ENCODE measurements at regions of chr5 and their contacts with region 1.

Region 1: DNA sequence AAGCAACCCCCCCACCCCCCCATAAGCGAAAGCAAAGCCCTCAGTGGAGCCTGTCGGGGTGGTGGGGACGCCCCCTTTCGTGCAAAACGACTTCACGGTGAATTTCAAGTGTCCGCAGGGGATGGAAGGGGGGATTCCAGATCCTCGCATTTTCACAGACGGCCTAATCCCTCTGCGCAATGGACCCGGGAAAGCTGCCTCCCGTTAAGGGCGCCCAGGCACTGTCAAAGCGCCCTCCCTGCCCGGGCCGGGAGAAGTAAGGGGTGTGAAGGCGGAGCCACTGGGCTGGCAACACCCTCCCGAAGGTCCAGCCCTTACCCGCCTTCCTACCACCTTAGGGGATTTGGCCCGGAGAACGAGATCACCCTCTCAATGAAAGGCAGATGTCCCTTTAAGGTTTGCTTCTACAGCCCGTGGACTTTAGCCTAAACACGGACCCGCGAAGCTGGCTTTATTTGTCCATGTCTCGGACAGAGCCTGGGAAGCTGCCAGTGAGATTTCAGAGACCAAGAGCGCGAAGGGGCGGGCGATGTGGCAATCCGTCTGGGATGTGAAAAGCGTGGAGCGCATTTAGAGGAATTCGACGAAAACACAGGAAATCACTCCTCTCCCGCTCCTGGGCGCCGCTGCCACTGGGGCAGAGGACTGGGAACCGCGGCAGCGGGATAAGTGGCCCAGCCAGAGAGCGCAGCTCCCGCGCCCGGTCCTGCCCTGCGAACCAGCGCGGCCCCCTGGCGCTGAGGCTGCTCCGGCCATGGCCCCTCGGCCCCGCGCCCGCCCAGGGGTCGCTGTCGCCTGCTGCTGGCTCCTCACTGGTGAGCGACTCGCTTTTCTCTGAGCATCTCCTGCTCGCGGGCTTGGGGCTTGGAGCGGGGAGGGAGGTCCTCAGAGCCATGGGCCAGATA is at the starts of genes ITGA1 and PELO:
- DNase-seq: peak; percentile 13 to 55 (median 44)
- ATAC-seq: peak; percentile 84
- H3K4me3 ChIP-seq: peak within 1 kb of the TSS; percentile 71
- H3K4me3 Mint-ChIP-seq: peak within 1 kb of the TSS; percentile 85 to 95 (median 92)
- H3K27ac ChIP-seq: peak within 1 kb of the TSS; percentile 67
- H3K27ac Mint-ChIP-seq: peak within 1 kb of the TSS; percentile 7 to 87 (median 59)
- H3K4me1 ChIP-seq: peaks cover 0 to 15% of the 10 kb centered on the region in 2 donors
- H3K4me1 Mint-ChIP-seq: peaks cover 16 to 40% (median 33%) of the 10 kb centered on the region in 7 donors
- H3K27me3 ChIP-seq: no peaks in the 10 kb centered on the region
- H3K27me3 Mint-ChIP-seq: peaks cover 0 to 41% (median 3%) of the 10 kb centered on the region in 5 donors
- total RNA-seq, gene ITGA1: 0.92 to 8.7 (median 2.4) TPM
- total RNA-seq, gene PELO: 7.7 to 16.8 (median 9.7) TPM

Region 2: GRCh38 chr5:52665559-52665958 is 122.3 kb before region 1 on chr5:
- CTCF ChIA-PET with region 1: interaction called, 3 read pairs
- POLR2A ChIA-PET with region 1: no interaction called
- intact Hi-C with region 1: loop called in 1 of 2 experiments (anchors 1 kb)
- DNase-seq: no peak
- ATAC-seq: no peak
- H3K4me3 ChIP-seq: no peak overlapping the region
- H3K4me3 Mint-ChIP-seq: no peak overlapping the region
- H3K27ac ChIP-seq: no peak overlapping the region
- H3K27ac Mint-ChIP-seq: peak overlapping the region in 1 of 9 donors; percentile 32
- H3K4me1 ChIP-seq: no peaks in the 10 kb centered on the region
- H3K4me1 Mint-ChIP-seq: peaks cover 0 to 15% (median 4%) of the 10 kb centered on the region in 7 donors
- H3K27me3 ChIP-seq: no peaks in the 10 kb centered on the region
- H3K27me3 Mint-ChIP-seq: peaks cover 0 to 33% (median 0%) of the 10 kb centered on the region in 5 donors

Region 3: DNA sequence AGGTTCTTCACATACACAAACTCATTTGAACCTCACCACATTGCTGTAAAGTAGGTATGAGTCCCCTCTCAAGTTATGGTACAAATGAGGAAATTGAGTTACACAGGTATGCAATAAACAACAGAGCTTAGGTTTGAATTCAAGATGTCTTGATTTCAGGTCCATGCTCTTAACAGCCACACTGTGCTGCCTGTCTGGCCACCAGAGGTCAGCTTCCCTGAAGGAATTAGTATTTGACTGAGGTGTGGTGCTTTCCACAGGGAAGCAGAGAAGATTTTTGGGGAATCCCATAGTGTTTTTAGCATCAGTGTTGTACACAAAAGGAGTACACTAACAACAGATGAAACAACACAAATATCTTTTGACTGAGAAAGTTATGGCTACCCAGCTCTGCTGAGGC is 94.6 kb before region 1 on chr5:
- CTCF ChIA-PET with region 1: interaction called, 3 read pairs
- POLR2A ChIA-PET with region 1: no interaction called
- intact Hi-C with region 1: loop called (anchors 1 kb)
- DNase-seq: peak in 7 of 9 donors; percentile 10 to 27 (median 25)
- ATAC-seq: peak; percentile 48
- H3K4me3 ChIP-seq: no peak overlapping the region
- H3K4me3 Mint-ChIP-seq: no peak overlapping the region
- H3K27ac ChIP-seq: no peak overlapping the region
- H3K27ac Mint-ChIP-seq: peak overlapping the region in 2 of 9 donors; percentile 1 to 18
- H3K4me1 ChIP-seq: no peaks in the 10 kb centered on the region
- H3K4me1 Mint-ChIP-seq: peaks cover 0 to 17% (median 7%) of the 10 kb centered on the region in 7 donors
- H3K27me3 ChIP-seq: no peaks in the 10 kb centered on the region
- H3K27me3 Mint-ChIP-seq: peaks cover 0 to 26% (median 0%) of the 10 kb centered on the region in 5 donors

Region 4: GRCh38 chr5:52743970-52744369 is 43.9 kb before region 1 on chr5:
- CTCF ChIA-PET with region 1: no interaction called
- POLR2A ChIA-PET with region 1: no interaction called
- intact Hi-C with region 1: loop called (anchors 1 kb)
- DNase-seq: peak in 8 of 9 donors; percentile 24 to 68 (median 54)
- ATAC-seq: peak; percentile 91
- H3K4me3 ChIP-seq: no peak overlapping the region
- H3K4me3 Mint-ChIP-seq: peak overlapping the region in 9 of 10 donors; percentile 42 to 70 (median 61)
- H3K27ac ChIP-seq: peak overlapping the region; percentile 49
- H3K27ac Mint-ChIP-seq: peak overlapping the region; percentile 80 to 93 (median 90)
- H3K4me1 ChIP-seq: peaks cover 35 to 36% of the 10 kb centered on the region in 2 donors
- H3K4me1 Mint-ChIP-seq: peaks cover 35 to 69% (median 61%) of the 10 kb centered on the region in 7 donors
- H3K27me3 ChIP-seq: no peaks in the 10 kb centered on the region
- H3K27me3 Mint-ChIP-seq: peaks cover 0 to 5% (median 0%) of the 10 kb centered on the region in 5 donors

Region 5: GRCh38 chr5:52771343-52772039 is 16.4 kb before region 1 on chr5:
- CTCF ChIA-PET with region 1: interaction called, 3 read pairs
- POLR2A ChIA-PET with region 1: interaction called, 4 read pairs
- intact Hi-C with region 1: loop called in 1 of 2 experiments (anchors 1 kb)
- DNase-seq: peak in 4 of 9 donors; percentile 21 to 43 (median 26)
- ATAC-seq: peak; percentile 71
- H3K4me3 ChIP-seq: peak overlapping the region; percentile 3
- H3K4me3 Mint-ChIP-seq: peak overlapping the region in 9 of 10 donors; percentile 42 to 78 (median 67)
- H3K27ac ChIP-seq: peak overlapping the region; percentile 31
- H3K27ac Mint-ChIP-seq: peak overlapping the region; percentile 67 to 94 (median 85)
- H3K4me1 ChIP-seq: peaks cover 34 to 45% of the 10 kb centered on the region in 2 donors
- H3K4me1 Mint-ChIP-seq: peaks cover 35 to 76% (median 49%) of the 10 kb centered on the region in 7 donors
- H3K27me3 ChIP-seq: no peaks in the 10 kb centered on the region
- H3K27me3 Mint-ChIP-seq: peaks cover 0 to 7% (median 0%) of the 10 kb centered on the region in 5 donors

Region 6: DNA sequence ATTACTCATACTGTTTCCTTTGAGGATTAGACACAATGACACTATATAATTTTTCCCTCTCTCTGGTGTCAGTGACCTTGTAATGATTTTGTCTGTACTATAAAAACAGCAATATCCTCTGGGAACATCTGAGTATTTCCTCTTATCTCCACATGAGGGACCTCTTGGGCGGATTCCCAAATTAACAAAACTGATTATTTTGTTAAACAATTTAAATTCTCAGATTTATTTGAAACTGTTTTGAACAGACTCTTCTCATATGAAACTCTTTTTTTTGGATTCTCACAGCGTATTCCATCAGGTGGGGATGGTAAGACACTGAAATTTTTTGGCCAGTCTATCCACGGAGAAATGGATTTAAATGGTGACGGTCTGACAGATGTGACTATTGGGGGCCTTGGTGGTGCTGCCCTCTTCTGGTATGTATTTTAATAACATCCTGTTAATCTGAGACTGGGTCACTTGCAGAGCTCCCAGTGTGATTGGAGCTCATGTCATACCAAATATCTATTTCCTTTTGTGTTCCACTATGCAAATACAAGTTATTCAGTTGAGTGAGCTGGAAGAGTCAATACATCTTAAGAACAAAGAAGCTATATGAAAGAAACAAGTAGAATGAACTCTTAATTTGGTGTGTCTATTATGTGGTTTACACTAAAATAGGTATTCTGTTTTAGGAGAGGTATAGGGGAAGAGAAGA is 127.5 kb after region 1 on chr5:
- CTCF ChIA-PET with region 1: interaction called, 5 read pairs
- POLR2A ChIA-PET with region 1: no interaction called
- intact Hi-C with region 1: loop called (anchors 1 kb)
- DNase-seq: peak in 8 of 9 donors; percentile 30 to 77 (median 69)
- ATAC-seq: peak; percentile 97
- H3K4me3 ChIP-seq: no peak overlapping the region
- H3K4me3 Mint-ChIP-seq: peak overlapping the region in 9 of 10 donors; percentile 19 to 79 (median 73)
- H3K27ac ChIP-seq: no peak overlapping the region
- H3K27ac Mint-ChIP-seq: peak overlapping the region in 2 of 9 donors; percentile 10 to 30
- H3K4me1 ChIP-seq: no peaks in the 10 kb centered on the region
- H3K4me1 Mint-ChIP-seq: peaks cover 5 to 9% (median 8%) of the 10 kb centered on the region in 7 donors
- H3K27me3 ChIP-seq: no peaks in the 10 kb centered on the region
- H3K27me3 Mint-ChIP-seq: peaks cover 0 to 9% (median 0%) of the 10 kb centered on the region in 5 donors

Region 7: DNA sequence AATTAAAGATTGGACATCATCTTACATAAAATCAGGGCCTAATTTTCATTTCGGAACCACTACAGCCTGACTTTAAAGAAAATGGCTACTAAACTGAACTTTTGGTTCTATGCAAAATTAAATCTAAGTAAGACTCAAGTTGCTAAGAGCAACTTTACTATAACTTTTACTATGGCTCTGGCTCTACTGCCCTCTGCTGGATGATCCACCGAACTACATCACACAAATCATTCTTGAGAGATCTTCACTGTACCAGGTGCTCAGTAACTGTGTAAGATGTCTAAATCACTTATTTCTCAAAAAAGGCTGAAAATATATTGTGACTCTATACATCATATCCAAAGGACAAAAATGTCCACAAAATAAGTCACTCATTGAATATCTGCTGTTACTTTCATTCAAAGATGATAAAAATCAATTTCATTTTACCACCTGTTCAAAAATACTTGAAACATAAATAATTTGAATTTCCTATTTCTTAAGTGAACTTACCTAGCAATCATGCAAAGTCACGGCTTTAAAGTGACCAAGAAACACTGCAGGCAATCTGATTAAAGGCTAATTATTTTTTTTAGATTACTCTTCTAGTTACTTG is 308.2 kb after region 1 on chr5:
- CTCF ChIA-PET with region 1: no interaction called
- POLR2A ChIA-PET with region 1: no interaction called
- intact Hi-C with region 1: loop called in 1 of 2 experiments (anchors 1 kb)
- DNase-seq: peak; percentile 17 to 69 (median 59)
- ATAC-seq: peak; percentile 96
- H3K4me3 ChIP-seq: no peak overlapping the region
- H3K4me3 Mint-ChIP-seq: no peak overlapping the region
- H3K27ac ChIP-seq: no peak overlapping the region
- H3K27ac Mint-ChIP-seq: peak overlapping the region in 3 of 9 donors; percentile 41 to 64 (median 53)
- H3K4me1 ChIP-seq: no peaks in the 10 kb centered on the region
- H3K4me1 Mint-ChIP-seq: peaks cover 0 to 28% (median 3%) of the 10 kb centered on the region in 7 donors
- H3K27me3 ChIP-seq: no peaks in the 10 kb centered on the region
- H3K27me3 Mint-ChIP-seq: no peaks in the 10 kb centered on the region

Measured in naive thymus-derived CD4-positive, alpha-beta T cell (primary cell).